H1 (cell line): ENCODE measurements at regions of chr2 and their contacts with region 1.

Region 1: GRCh38 chr2:33372940-33373553 is 103.4 kb upstream of the RASGRP3 start:
- DNase-seq: no peak
- H3K4me3 ChIP-seq: no peak overlapping the region
- H3K27ac ChIP-seq: no peak overlapping the region
- H3K4me1 ChIP-seq: no peaks in the 10 kb centered on the region
- H3K27me3 ChIP-seq: no peaks in the 10 kb centered on the region
- CTCF ChIP-seq: peak in 2 of 3 experiments; percentile 57 to 65; a peak in 3 of 4 replicates
- EP300 ChIP-seq: no peak
- POLR2A ChIP-seq: no peak
- RAD21 ChIP-seq: peak; percentile 77 to 78

Region 2: DNA sequence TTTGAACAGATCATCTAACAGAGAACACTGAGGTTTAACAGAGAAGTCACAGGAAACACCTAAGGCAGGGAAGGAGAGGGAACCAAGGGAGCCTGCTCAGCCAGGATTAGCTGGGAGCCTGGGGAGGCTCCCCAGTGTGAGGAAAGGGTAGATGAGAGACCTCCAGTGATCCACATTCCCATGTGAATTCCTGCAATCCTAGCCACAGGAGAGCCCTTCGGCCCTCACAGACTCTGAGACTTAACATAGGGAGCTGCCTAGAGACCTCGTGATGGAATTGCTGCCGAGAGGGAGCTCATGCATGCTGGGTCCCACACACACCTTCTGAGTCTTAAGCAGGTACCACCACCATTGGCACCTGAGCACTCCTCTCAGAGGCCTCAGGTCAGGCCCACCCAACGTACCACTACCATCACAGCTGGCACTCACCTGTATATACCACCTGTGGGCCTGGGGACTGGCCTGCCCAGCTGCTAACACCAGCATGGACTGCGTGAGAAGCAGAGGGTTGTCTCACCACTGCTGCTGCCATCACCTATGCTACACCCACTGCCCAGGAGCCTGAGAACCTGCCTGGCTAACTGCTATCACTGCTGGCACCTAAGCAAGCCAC is 122.5 kb before region 1 on chr2:
- CTCF ChIA-PET with region 1: interaction called, 11 read pairs
- POLR2A ChIA-PET with region 1: no interaction called
- DNase-seq: no peak
- H3K4me3 ChIP-seq: no peak overlapping the region
- H3K27ac ChIP-seq: no peak overlapping the region
- H3K4me1 ChIP-seq: no peaks in the 10 kb centered on the region; a peak in 1 of 7 replicates
- H3K27me3 ChIP-seq: no peaks in the 10 kb centered on the region; a peak in 3 of 7 replicates
- CTCF ChIP-seq: no peak
- EP300 ChIP-seq: no peak
- POLR2A ChIP-seq: no peak
- RAD21 ChIP-seq: no peak

Region 3: DNA sequence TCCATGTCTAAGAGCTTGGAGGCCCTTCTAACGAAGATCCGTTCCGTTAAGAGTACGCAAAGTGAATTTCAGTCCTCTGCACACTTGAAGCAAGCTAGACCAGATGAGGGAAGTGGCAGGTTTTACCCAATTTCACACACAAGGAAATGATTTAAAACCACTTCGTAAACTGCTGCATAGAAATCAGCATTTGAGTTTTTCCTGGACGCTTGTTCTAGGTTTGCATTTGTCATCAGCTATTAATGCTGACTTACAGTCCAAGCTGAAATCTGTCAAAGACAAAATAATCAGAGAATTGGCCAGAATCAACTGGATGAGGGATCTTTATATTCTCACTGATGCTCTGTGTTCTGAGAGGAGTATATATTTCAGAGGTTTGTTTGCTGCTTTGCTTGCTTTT is 14.2 kb before region 1 on chr2:
- CTCF ChIA-PET with region 1: interaction called, 23 read pairs
- POLR2A ChIA-PET with region 1: interaction called, 3 read pairs
- DNase-seq: no peak
- H3K4me3 ChIP-seq: no peak overlapping the region
- H3K27ac ChIP-seq: no peak overlapping the region
- H3K4me1 ChIP-seq: no peaks in the 10 kb centered on the region; a peak in 1 of 7 replicates
- H3K27me3 ChIP-seq: no peaks in the 10 kb centered on the region
- CTCF ChIP-seq: no peak
- EP300 ChIP-seq: no peak
- POLR2A ChIP-seq: no peak
- RAD21 ChIP-seq: no peak

Region 4: DNA sequence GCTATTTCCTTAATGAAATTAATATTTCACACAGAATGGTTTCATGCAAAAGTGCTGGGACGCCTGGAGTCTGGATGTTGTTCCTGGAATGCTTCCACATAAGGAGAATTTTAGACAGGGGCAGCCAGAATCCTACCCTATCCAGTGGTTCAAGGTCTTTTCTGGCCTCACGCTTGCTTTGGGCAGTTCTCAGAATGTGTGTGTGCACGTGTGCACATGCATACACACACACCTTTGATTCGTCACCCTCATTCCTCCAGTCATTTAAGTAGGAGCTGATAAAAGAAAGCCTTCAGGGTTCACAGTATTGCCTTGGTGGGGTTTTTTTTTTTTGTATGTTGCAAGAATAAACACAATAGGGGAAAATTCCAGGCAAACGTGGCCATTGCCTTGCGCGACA is 14.4 kb after region 1 on chr2:
- CTCF ChIA-PET with region 1: interaction called, 60 read pairs
- POLR2A ChIA-PET with region 1: no interaction called
- DNase-seq: no peak
- H3K4me3 ChIP-seq: no peak overlapping the region
- H3K27ac ChIP-seq: no peak overlapping the region
- H3K4me1 ChIP-seq: no peaks in the 10 kb centered on the region
- H3K27me3 ChIP-seq: no peaks in the 10 kb centered on the region
- CTCF ChIP-seq: no peak
- EP300 ChIP-seq: no peak
- POLR2A ChIP-seq: no peak
- RAD21 ChIP-seq: no peak